PC-9 (cell line): ENCODE measurements at regions of chr11 and their contacts with region 1.

Region 1: DNA sequence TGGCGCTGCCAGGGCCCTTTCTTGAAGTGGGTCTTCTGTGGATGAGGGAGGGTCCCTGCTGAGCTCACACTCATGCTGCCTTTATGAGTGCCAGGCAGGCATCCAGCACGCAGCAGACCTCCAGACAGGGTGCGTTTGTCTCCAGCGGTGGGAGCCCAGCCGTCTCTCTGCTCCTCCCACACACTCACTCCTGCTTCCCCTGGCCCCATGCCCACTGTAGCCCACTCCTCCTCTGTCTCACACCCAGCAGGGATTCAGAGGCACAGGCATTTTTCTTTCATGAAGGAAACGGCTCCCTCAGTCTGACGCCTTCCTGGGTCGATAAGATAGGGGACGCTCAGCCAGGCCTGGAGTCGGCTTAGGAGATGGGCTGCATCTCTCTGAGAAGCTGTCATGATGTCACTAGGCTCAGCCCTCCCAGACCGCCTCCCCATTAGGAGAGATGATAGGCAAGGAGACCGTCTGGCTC is 183.9 kb upstream of the NCAM1 start:
- DNase-seq: no peak
- H3K4me3 ChIP-seq: no peak overlapping the region
- H3K27ac ChIP-seq: no peak overlapping the region
- H3K4me1 ChIP-seq: 0 out of 2 replicates have a peak, but pooled peaks cover 4% of the 10 kb centered on the region
- H3K27me3 ChIP-seq: peaks cover 42% of the 10 kb centered on the region; the same call in 1 of the 2 replicates
- CTCF ChIP-seq: no peak

Region 2: DNA sequence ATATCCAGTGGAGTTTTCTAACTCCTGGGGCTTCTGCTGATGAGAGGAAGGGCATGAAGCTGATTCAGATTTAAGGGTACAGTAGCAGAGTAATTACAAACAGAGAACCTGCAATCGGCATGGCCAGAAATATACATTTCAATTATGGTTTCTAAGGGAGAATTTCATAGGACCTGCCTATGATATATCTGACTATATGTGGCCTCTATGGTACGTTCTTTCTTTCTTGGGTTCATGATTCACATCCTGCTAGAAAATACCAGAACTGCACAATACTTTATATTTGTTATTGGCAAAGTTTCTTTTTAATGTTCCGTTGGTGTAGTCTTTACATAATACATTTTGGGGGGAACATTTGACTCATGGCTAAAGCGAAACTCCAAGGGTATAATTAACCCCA is 474.0 kb after region 1 on chr11:
- CTCF ChIA-PET with region 1: no interaction called
- POLR2A ChIA-PET with region 1: interaction called, 11 read pairs
- intact Hi-C with region 1: no loop called
- DNase-seq: no peak
- H3K4me3 ChIP-seq: no peak overlapping the region
- H3K27ac ChIP-seq: no peak overlapping the region
- H3K4me1 ChIP-seq: 0 out of 2 replicates have a peak, but pooled peaks cover 4% of the 10 kb centered on the region
- H3K27me3 ChIP-seq: no peaks in the 10 kb centered on the region; the same call in 1 of the 2 replicates
- CTCF ChIP-seq: no peak